ENCODE measurements at regions of chr14 and their contacts with region 1.

Region 1: DNA sequence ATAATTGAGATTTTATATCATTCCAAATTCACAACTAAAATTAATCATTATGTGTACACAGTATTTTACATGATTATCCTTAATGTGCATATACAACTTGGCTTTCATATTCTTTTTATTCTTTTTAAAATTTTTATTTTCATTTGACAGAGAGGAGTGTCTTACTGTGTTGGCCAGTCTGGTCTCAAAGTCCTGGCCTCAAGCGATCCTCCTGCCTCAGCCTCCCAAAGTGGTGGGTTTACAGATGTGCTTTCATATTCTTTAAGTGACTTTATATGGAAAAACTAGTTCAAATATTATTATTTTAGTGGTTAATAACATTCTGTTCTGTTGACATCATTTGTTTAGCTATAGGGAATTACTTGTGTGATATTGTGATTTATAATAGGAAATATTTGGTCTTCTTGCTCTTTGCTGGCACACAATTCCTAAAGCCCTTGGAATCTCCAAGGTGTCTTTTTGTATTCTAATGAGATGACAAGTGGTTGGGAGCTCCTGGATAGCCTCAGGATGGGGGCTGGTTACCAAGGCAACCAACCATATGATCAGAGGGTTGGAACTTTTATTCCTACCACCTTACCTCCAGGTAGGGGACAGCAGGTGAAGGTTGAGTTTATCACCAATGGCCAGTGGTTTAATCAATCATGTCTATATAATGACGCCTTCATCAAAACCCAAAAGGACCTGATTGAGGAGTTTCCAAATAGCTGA is 16.0 kb upstream of the ZNF410 start:
- DNase-seq: no peak
- H3K4me3 Mint-ChIP-seq: no peak overlapping the region
- H3K27ac Mint-ChIP-seq: no peak overlapping the region
- H3K4me1 Mint-ChIP-seq: no peaks in the 10 kb centered on the region
- H3K27me3 Mint-ChIP-seq: peaks cover 2% of the 10 kb centered on the region

Region 2: DNA sequence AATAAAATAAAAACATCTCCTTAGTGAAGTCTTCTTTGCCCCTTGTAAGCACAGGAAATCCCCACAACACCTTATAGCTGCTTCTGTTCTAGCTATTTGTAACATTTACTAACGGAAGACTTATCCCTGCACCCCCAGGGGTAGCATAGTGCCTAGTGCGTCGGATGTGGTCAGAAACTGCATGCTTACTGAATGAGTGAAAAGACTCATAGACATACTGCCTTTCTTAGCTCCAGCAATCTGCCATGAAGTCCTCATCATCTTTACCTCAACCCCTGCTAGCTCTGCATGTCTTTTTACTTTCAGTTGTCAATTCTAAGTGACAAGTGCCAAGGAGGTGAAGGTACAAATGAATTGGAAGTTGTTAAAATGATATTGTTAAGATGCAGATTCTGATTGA is 367.0 kb before region 1 on chr14:
- intact Hi-C with region 1: loop called (anchors 2 kb)
- DNase-seq: no peak
- H3K4me3 Mint-ChIP-seq: no peak overlapping the region
- H3K27ac Mint-ChIP-seq: no peak overlapping the region
- H3K4me1 Mint-ChIP-seq: no peaks in the 10 kb centered on the region
- H3K27me3 Mint-ChIP-seq: no peaks in the 10 kb centered on the region

Region 3: GRCh38 chr14:73842851-73843250 is 27.8 kb before region 1 on chr14:
- intact Hi-C with region 1: no loop called
- DNase-seq: no peak
- H3K4me3 Mint-ChIP-seq: no peak overlapping the region
- H3K27ac Mint-ChIP-seq: no peak overlapping the region
- H3K4me1 Mint-ChIP-seq: no peaks in the 10 kb centered on the region
- H3K27me3 Mint-ChIP-seq: peaks cover 11% of the 10 kb centered on the region

Region 4: GRCh38 chr14:73855194-73855593 is 15.5 kb before region 1 on chr14:
- intact Hi-C with region 1: no loop called
- DNase-seq: no peak
- H3K4me3 Mint-ChIP-seq: no peak overlapping the region
- H3K27ac Mint-ChIP-seq: no peak overlapping the region
- H3K4me1 Mint-ChIP-seq: peaks cover 20% of the 10 kb centered on the region
- H3K27me3 Mint-ChIP-seq: no peaks in the 10 kb centered on the region

Measured in activated T-helper 1 cell treated with anti-CD3 and anti-CD28 coated beads, Interleukin-12 subunit alpha, Interleukin-12 subunit beta, Interleukin-2, Interleukin-4 antibody, amounts not matched to agents 30 ng/mL and 10 ng/mL and 1 ng/mL, durations not matched to agents 14 hours and 24 hours and 36 hours (primary cell).